ENCODE measurements at regions of chr2 and their contacts with region 1.

Region 1: DNA sequence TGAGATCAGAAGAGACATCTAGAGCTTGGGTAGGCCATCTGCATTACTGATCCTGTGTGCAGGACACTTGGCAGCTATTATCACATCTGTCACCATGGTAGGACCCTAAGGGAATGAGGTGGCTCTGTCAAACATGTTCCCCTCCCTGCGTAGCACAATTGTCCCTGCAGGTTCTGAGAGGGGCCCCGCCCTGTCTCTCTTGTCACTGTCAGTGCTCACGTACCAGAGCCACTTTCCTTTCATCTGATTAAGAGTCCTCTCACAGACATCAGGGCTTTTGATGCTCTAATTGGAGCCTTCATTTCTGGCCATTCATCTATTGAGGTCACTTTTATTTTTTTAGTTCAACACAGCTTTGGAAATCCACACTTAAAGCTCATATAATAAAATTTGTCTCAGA is 38.5 kb downstream of the NEB start:
- DNase-seq: no peak
- ATAC-seq: peak; percentile 75
- H3K4me3 ChIP-seq: no peak overlapping the region
- H3K27ac ChIP-seq: no peak overlapping the region
- H3K4me1 ChIP-seq: no peaks in the 10 kb centered on the region
- H3K27me3 ChIP-seq: no peaks in the 10 kb centered on the region
- CTCF ChIP-seq: no peak
- EP300 ChIP-seq: no peak
- POLR2A ChIP-seq: no peak
- RAD21 ChIP-seq: no peak

Region 2: GRCh38 chr2:151782378-151783132 is 86.8 kb after region 1 on chr2:
- CTCF ChIA-PET with region 1: no interaction called
- POLR2A ChIA-PET with region 1: no interaction called
- in situ Hi-C with region 1: no loop called
- intact Hi-C with region 1: loop called (anchors 5 kb)
- DNase-seq: peak; percentile 66 to 88 (median 78)
- ATAC-seq: peak; percentile 95
- H3K4me3 ChIP-seq: no peak overlapping the region
- H3K27ac ChIP-seq: peak overlapping the region; percentile 69
- H3K4me1 ChIP-seq: peaks cover 0 to 35% of the 10 kb centered on the region in 2 experiments
- H3K27me3 ChIP-seq: no peaks in the 10 kb centered on the region
- CTCF ChIP-seq: peak in 1 of 3 experiments; percentile 27; a peak in 1 of 6 replicates
- EP300 ChIP-seq: peak; percentile 99
- POLR2A ChIP-seq: no peak
- RAD21 ChIP-seq: peak; percentile 50 to 64